ENCODE measurements at regions of chr15 and their contacts with region 1.

Region 1: GRCh38 chr15:56245871-56246814 is 2.5 kb upstream of the RFX7 start:
- DNase-seq: peak; percentile 21 to 93
- H3K4me3 ChIP-seq: peak overlapping the region; percentile 37 to 48
- H3K27ac ChIP-seq: peak overlapping the region; percentile 31 to 66
- H3K4me1 ChIP-seq: peaks cover 0 to 10% of the 10 kb centered on the region in 2 donors
- H3K27me3 ChIP-seq: no peaks in the 10 kb centered on the region
- CTCF ChIP-seq: peak; percentile 93 to 99 (median 99)

Region 2: DNA sequence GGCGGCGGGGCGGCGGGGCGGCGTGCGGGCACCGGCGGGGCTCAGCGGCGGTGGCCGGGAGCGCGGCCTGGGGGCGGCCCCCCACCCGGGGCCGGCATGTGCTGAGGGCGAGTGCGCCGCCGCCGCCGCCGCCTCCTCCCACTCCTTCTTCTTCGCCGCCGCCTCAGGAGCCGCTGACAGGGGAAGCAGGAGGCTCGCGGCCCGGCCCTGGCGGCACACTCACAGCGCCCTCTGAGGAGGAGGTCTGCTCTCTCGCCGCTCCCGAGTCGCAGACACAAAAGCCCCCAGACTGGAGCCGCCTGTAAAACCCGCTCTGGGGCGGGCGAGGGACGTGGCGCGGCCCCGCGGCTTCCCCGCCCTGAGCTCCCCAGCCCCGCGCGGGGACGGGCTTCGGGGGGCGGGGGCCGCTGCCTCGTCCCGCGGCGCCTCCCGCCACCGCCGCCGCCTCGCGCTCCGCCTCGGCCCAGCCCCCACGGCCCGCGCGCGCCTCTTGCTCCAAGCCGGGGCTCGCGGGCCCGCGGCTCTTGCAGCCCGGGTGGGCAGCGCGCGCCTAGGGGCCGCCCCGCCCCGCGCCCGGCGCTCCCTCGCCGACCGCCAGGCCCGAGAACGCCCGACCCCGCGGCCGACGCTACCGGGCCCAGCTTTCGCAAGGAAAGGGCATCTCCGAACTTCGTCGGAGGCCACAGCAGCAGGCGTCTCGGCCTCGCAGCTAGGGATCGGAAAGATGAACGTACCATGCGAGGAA is 657.9 kb before region 1 on chr15 and contains the start of gene PYGO1:
- intact Hi-C with region 1: loop called (anchors 10 kb)
- DNase-seq: peak in 1 of 2 donors; percentile 69
- H3K4me3 ChIP-seq: peak within 1 kb of the TSS; percentile 73 to 80
- H3K27ac ChIP-seq: peak within 1 kb of the TSS; percentile 86 to 98
- H3K4me1 ChIP-seq: peaks cover 0 to 13% of the 10 kb centered on the region in 2 donors
- H3K27me3 ChIP-seq: no peaks in the 10 kb centered on the region
- CTCF ChIP-seq: no peak
- total RNA-seq, gene PYGO1: 7.1 TPM

Region 3: GRCh38 chr15:55993111-55993803 is 252.9 kb before region 1 on chr15 and contains the start of gene NEDD4:
- intact Hi-C with region 1: loop called (anchors 10 kb)
- DNase-seq: peak; percentile 33 to 93
- H3K4me3 ChIP-seq: peak within 1 kb of the TSS; percentile 88 to 89
- H3K27ac ChIP-seq: peak within 1 kb of the TSS; percentile 88 to 95
- H3K4me1 ChIP-seq: peaks cover 0 to 8% of the 10 kb centered on the region in 2 donors
- H3K27me3 ChIP-seq: no peaks in the 10 kb centered on the region
- CTCF ChIP-seq: peak; percentile 21 to 57 (median 38)
- total RNA-seq, gene NEDD4: 6.1 TPM

Region 4: GRCh38 chr15:56102441-56102840 is 143.7 kb before region 1 on chr15:
- intact Hi-C with region 1: loop called (anchors 2 kb)
- DNase-seq: no peak
- H3K4me3 ChIP-seq: no peak overlapping the region
- H3K27ac ChIP-seq: peak overlapping the region; percentile 58 to 67
- H3K4me1 ChIP-seq: peaks cover 0 to 9% of the 10 kb centered on the region in 2 donors
- H3K27me3 ChIP-seq: no peaks in the 10 kb centered on the region
- CTCF ChIP-seq: no peak

Region 5: DNA sequence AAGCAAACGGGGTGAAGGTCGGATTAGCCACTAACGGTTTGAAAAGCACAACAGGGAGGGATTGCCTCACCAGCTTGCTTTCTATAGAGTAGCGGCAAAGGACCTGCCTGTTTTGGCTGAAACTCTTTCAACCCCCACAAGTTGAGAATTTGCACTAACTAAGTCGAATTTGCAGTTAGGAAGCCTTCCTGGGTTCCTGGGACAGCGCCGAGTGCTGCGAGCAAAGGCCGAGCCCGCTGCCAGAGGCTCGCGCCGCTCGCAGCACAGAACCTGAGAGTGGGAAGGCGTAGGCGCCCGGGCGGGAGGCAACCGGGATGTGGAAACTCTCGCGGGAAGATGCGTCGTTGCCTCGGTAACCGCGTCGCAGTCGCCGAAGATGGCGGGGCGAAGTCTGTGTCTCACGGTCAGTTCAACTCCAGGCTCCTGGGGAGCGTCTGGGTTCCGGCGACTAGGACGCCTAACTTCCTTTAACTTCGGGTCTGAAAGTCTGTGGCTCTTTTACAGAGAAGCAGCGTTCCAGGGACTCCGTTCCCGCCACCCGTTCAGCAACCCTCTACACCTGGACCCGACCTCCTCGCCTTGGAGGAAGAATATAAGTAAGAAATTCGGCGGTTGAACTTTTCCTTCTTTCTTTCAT is 119.0 kb after region 1 on chr15 and contains the start of gene TEX9:
- intact Hi-C with region 1: loop called (anchors 5 kb)
- DNase-seq: peak; percentile 27 to 84
- H3K4me3 ChIP-seq: peak within 1 kb of the TSS; percentile 66 to 67
- H3K27ac ChIP-seq: peak within 1 kb of the TSS in 1 of 2 donors; percentile 13
- H3K4me1 ChIP-seq: peaks cover 0 to 3% of the 10 kb centered on the region in 2 donors
- H3K27me3 ChIP-seq: no peaks in the 10 kb centered on the region
- CTCF ChIP-seq: no peak
- total RNA-seq, gene TEX9: 12.5 TPM

Region 6: GRCh38 chr15:56428821-56429458 is 182.8 kb after region 1 on chr15:
- intact Hi-C with region 1: loop called (anchors 2 kb)
- DNase-seq: no peak
- H3K4me3 ChIP-seq: no peak overlapping the region
- H3K27ac ChIP-seq: no peak overlapping the region
- H3K4me1 ChIP-seq: no peaks in the 10 kb centered on the region
- H3K27me3 ChIP-seq: no peaks in the 10 kb centered on the region
- CTCF ChIP-seq: peak in 2 of 3 experiments; percentile 12 to 44

Measured in ascending aorta (tissue), 2 donors.